Activated T-helper 2 cell treated with anti-CD3 and anti-CD28 coated beads, Interferon-gamma antibody, Interleukin-2, Interleukin-4, amounts not matched to agents 10 μg/mL and 5 μg/mL and 100 μg/mL, durations not matched to agents 14 hours and 24 hours and 36 hours (primary cell): ENCODE measurements at regions of chr18 and their contacts with region 1.

Region 1: DNA sequence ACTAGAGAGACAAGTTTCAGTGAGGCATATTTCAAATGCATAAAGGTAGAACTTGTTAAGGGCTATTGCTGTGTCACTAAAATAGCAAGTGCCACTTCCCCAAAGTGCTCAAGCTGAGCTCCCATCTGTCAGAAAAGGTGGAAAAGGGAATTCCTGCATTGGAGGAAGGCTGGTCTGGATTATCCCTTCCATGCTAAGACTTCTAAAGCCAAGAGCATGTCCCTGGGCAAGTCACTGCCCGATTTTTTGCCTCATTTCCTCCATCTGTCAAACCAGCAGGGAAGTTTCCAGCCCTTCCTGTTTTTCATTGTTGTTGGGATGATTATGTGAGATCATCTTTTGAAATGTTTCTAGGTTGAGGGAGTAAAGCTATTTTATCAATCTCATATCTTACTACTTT is 175.5 kb downstream of the SETBP1 start:
- DNase-seq: no peak
- H3K4me3 Mint-ChIP-seq: no peak overlapping the region
- H3K27ac Mint-ChIP-seq: no peak overlapping the region
- H3K4me1 Mint-ChIP-seq: peaks cover 4% of the 10 kb centered on the region
- H3K27me3 Mint-ChIP-seq: peaks cover 7% of the 10 kb centered on the region

Region 2: GRCh38 chr18:44805643-44806042 is 50.5 kb before region 1 on chr18:
- intact Hi-C with region 1: no loop called
- DNase-seq: no peak
- H3K4me3 Mint-ChIP-seq: no peak overlapping the region
- H3K27ac Mint-ChIP-seq: peak overlapping the region; percentile 68
- H3K4me1 Mint-ChIP-seq: peaks cover 41% of the 10 kb centered on the region
- H3K27me3 Mint-ChIP-seq: peaks cover 2% of the 10 kb centered on the region

Region 3: GRCh38 chr18:44838971-44839666 is 17.0 kb before region 1 on chr18:
- intact Hi-C with region 1: loop called (anchors 2 kb)
- DNase-seq: peak; percentile 62
- H3K4me3 Mint-ChIP-seq: no peak overlapping the region
- H3K27ac Mint-ChIP-seq: peak overlapping the region; percentile 5
- H3K4me1 Mint-ChIP-seq: peaks cover 39% of the 10 kb centered on the region
- H3K27me3 Mint-ChIP-seq: no peaks in the 10 kb centered on the region

Region 4: GRCh38 chr18:46199515-46200147 is 1343.5 kb after region 1 on chr18:
- intact Hi-C with region 1: no loop called
- DNase-seq: no peak
- H3K4me3 Mint-ChIP-seq: no peak overlapping the region
- H3K27ac Mint-ChIP-seq: peak overlapping the region; percentile 63
- H3K4me1 Mint-ChIP-seq: peaks cover 46% of the 10 kb centered on the region
- H3K27me3 Mint-ChIP-seq: no peaks in the 10 kb centered on the region